ENCODE measurements at regions of chr6 and their contacts with region 1.

Region 1: DNA sequence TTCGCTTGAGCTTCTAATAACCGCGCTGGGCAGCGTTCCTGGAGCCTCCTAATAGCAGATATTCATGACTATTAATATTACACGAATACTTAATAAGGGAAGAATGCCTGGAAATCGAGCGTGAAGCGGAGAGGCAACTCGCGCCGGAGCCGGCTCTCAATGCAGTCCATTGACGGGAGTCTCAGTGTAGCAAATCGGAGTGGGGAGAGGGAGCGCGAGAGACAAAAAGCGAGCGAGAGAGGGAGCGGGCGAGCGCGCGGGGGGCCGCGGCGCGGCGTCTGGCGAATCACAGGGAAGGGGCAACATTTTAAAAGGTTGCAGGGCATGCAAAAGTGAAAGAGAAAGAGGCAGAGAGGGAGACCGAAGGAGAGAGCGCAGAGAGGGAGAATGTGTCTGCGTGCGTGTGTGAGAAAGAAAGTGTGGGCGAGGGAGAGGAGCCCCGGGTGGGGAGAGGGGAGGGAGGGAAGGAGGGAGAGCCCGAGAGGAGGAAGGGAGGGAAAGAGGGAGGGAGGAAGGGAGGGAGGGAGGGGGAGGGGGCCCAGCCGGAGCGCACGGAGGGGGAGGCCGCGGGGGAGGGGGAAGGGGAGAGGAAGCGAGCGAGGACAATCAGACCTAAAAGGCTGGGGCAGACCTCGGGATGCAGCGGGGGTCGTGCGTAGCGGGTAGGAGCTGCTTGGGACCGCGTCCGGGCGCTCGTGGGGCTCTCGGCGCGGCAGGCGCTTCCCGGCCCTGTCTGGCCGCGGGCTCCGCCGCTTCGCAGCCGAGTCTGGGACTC is 2.7 kb downstream of the TFAP2A start:
- DNase-seq: peak; percentile 75
- ATAC-seq: peak; percentile 50
- H3K4me3 ChIP-seq: peak overlapping the region; percentile 67
- H3K27ac ChIP-seq: peak overlapping the region; percentile 64
- H3K4me1 ChIP-seq: no peaks in the 10 kb centered on the region; the same call in 1 of the 2 replicates
- H3K27me3 ChIP-seq: peaks cover 74% of the 10 kb centered on the region
- CTCF ChIP-seq: no peak
- POLR2A ChIP-seq: no peak
- RAD21 ChIP-seq: no peak

Region 2: GRCh38 chr6:9140172-9140571 is 1272.0 kb before region 1 on chr6:
- CTCF ChIA-PET with region 1: no interaction called
- POLR2A ChIA-PET with region 1: no interaction called
- dilution Hi-C with region 1: no loop called
- in situ Hi-C with region 1: no loop called
- intact Hi-C with region 1: loop called (anchors 5 kb)
- DNase-seq: peak; percentile 12
- ATAC-seq: peak; percentile 5; the same call in 1 of the 2 replicates
- H3K4me3 ChIP-seq: no peak overlapping the region
- H3K27ac ChIP-seq: no peak overlapping the region
- H3K4me1 ChIP-seq: peaks cover 5% of the 10 kb centered on the region
- H3K27me3 ChIP-seq: no peaks in the 10 kb centered on the region
- CTCF ChIP-seq: no peak
- POLR2A ChIP-seq: no peak
- RAD21 ChIP-seq: no peak

Region 3: DNA sequence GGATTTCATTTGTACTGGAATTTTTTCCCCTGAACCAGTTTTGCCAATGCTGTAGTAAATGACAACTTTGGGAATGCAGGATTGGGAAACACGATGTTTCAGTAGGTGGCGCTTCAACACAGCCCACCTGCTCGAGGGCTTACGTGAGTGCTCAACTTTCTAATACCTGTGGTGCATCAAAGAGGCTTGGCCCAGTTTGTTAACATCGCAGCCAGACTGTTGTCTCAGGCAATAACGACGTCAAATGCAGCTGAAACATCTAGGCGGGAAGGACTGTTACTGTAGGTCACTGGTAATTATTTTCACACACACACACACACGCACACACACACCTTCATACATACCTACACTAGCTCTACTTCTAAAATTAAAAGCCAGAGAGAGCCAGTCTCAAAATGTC is 1161.3 kb before region 1 on chr6:
- CTCF ChIA-PET with region 1: interaction called, 5 read pairs
- POLR2A ChIA-PET with region 1: no interaction called
- dilution Hi-C with region 1: no loop called
- in situ Hi-C with region 1: no loop called
- intact Hi-C with region 1: loop called (anchors 5 kb)
- DNase-seq: peak; percentile 53
- ATAC-seq: peak; percentile 59
- H3K4me3 ChIP-seq: no peak overlapping the region
- H3K27ac ChIP-seq: no peak overlapping the region
- H3K4me1 ChIP-seq: no peaks in the 10 kb centered on the region
- H3K27me3 ChIP-seq: no peaks in the 10 kb centered on the region
- CTCF ChIP-seq: peak; percentile 55
- POLR2A ChIP-seq: no peak
- RAD21 ChIP-seq: peak; percentile 80

Region 4: DNA sequence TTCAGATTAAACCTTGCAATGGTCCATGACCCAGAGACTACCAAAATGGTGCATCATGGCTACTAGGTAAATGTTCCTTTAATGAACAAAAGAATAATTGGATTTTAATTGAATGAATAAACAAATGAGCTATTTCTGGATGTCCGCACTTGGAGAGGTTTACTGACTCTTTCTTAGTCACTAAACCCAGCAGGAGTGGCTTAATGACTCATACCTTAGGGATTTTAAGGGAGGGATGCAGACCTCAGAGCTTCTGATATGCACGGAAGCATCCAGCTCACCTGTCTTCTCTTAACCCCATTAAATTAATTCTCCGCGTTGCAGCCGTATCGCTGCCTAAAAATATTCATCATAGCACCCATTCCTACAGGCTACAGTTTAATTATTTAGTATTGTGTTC is 1006.8 kb before region 1 on chr6:
- CTCF ChIA-PET with region 1: no interaction called
- POLR2A ChIA-PET with region 1: no interaction called
- dilution Hi-C with region 1: no loop called
- in situ Hi-C with region 1: no loop called
- intact Hi-C with region 1: loop called (anchors 10 kb)
- DNase-seq: peak; percentile 91
- ATAC-seq: peak; percentile 75
- H3K4me3 ChIP-seq: no peak overlapping the region
- H3K27ac ChIP-seq: no peak overlapping the region
- H3K4me1 ChIP-seq: peaks cover 7% of the 10 kb centered on the region
- H3K27me3 ChIP-seq: no peaks in the 10 kb centered on the region
- CTCF ChIP-seq: no peak
- POLR2A ChIP-seq: no peak
- RAD21 ChIP-seq: no peak

Region 5: DNA sequence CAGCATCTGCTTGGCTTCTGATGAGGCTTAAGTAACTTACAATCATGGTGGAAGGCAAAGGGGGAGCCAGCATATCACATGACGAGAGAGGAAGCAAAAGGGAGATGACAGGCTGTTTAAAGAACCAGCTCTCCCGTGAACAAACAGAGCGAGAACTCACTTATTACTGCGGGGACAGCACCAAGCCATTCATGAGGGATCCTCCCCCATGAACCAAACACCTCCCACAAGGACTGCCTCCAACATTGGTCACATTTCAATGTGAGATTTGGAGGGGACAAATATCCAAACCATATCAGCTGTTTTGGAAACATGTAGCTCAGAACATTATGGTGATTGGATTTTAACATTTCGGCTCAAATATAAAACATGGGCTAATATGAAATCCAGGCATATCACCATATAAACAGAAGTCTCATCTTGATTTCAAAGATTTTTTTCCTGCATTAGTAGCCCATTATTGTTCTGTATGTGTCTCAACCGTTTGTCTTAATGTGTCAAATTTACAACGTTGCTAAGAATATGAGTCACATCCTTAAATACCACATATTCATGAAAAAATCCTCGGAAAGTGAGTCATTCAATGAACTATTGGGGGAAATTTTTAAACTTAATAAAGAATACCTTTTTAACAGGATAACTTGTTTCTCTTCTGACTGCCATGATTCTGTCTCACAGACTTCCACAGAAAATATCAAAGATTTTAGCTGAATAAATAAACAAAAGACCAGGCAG is 891.6 kb before region 1 on chr6:
- CTCF ChIA-PET with region 1: no interaction called
- POLR2A ChIA-PET with region 1: no interaction called
- dilution Hi-C with region 1: no loop called
- in situ Hi-C with region 1: loop called (anchors 25 kb)
- intact Hi-C with region 1: loop called (anchors 5 kb)
- DNase-seq: peak; percentile 89
- ATAC-seq: peak; percentile 39
- H3K4me3 ChIP-seq: no peak overlapping the region
- H3K27ac ChIP-seq: peak overlapping the region; percentile 57
- H3K4me1 ChIP-seq: peaks cover 10% of the 10 kb centered on the region
- H3K27me3 ChIP-seq: no peaks in the 10 kb centered on the region
- CTCF ChIP-seq: no peak
- POLR2A ChIP-seq: no peak
- RAD21 ChIP-seq: no peak

Region 6: DNA sequence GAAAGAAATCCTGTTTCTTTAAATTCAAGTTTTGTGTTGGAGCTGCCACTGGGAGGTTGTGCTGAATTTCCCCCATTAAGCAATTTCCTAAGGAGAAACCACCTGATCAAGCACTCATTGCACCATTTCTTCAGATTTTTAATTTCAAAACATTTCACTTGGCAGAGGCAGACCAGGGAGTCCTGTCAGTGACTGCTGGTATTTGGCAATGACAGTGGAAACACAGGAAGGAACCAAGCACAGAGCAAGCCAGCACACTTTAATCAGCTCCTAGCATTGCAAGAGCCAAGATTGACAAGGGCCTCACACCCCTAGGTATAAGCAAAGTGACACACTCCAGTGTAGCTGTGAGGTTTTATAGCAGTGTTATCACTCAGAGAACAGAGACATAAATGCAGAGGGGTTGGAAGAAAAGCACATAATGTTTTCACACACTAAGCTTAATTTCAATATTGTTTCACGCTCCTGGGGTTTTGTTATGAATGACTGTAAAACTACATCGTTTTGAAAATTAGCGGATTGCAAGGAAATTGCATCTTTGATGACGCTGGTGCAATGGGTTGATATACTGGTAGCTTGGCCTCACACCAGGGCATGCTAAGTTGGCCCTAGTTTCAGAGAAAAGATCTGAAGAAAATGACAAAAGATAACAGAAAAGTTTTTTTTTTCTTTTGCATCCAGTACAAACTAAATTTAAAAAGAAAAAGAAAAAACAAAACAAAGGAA is 765.7 kb before region 1 on chr6:
- CTCF ChIA-PET with region 1: no interaction called
- POLR2A ChIA-PET with region 1: no interaction called
- dilution Hi-C with region 1: no loop called
- in situ Hi-C with region 1: no loop called
- intact Hi-C with region 1: loop called (anchors 10 kb)
- DNase-seq: peak; percentile 38
- ATAC-seq: peak; percentile 28; the same call in 1 of the 2 replicates
- H3K4me3 ChIP-seq: no peak overlapping the region
- H3K27ac ChIP-seq: peak overlapping the region; percentile 60
- H3K4me1 ChIP-seq: peaks cover 6% of the 10 kb centered on the region
- H3K27me3 ChIP-seq: no peaks in the 10 kb centered on the region
- CTCF ChIP-seq: no peak
- POLR2A ChIP-seq: no peak
- RAD21 ChIP-seq: no peak

Region 7: GRCh38 chr6:10256113-10256690 is 156.0 kb before region 1 on chr6:
- CTCF ChIA-PET with region 1: no interaction called
- POLR2A ChIA-PET with region 1: no interaction called
- dilution Hi-C with region 1: no loop called
- in situ Hi-C with region 1: no loop called
- intact Hi-C with region 1: loop called (anchors 5 kb)
- DNase-seq: no peak
- ATAC-seq: peak; percentile 46; the same call in 1 of the 2 replicates
- H3K4me3 ChIP-seq: no peak overlapping the region
- H3K27ac ChIP-seq: no peak overlapping the region
- H3K4me1 ChIP-seq: no peaks in the 10 kb centered on the region
- H3K27me3 ChIP-seq: no peaks in the 10 kb centered on the region
- CTCF ChIP-seq: peak; percentile 34
- POLR2A ChIP-seq: no peak
- RAD21 ChIP-seq: no peak

Region 8: GRCh38 chr6:10598084-10598960 is 186.2 kb after region 1 on chr6:
- CTCF ChIA-PET with region 1: no interaction called
- POLR2A ChIA-PET with region 1: no interaction called
- dilution Hi-C with region 1: no loop called
- in situ Hi-C with region 1: no loop called
- intact Hi-C with region 1: no loop called
- DNase-seq: no peak
- ATAC-seq: no peak
- H3K4me3 ChIP-seq: no peak overlapping the region
- H3K27ac ChIP-seq: no peak overlapping the region
- H3K4me1 ChIP-seq: no peaks in the 10 kb centered on the region
- H3K27me3 ChIP-seq: no peaks in the 10 kb centered on the region
- CTCF ChIP-seq: no peak
- POLR2A ChIP-seq: no peak
- RAD21 ChIP-seq: no peak

Region 9: GRCh38 chr6:10886691-10887535 is 474.8 kb after region 1 on chr6 and contains the start of gene SYCP2L:
- CTCF ChIA-PET with region 1: no interaction called
- POLR2A ChIA-PET with region 1: no interaction called
- dilution Hi-C with region 1: no loop called
- in situ Hi-C with region 1: no loop called
- intact Hi-C with region 1: no loop called
- DNase-seq: peak; percentile 65
- ATAC-seq: peak; percentile 72
- H3K4me3 ChIP-seq: peak within 1 kb of the TSS; percentile 43
- H3K27ac ChIP-seq: no peak within 1 kb of the TSS
- H3K4me1 ChIP-seq: no peaks in the 10 kb centered on the region
- H3K27me3 ChIP-seq: peaks cover 48% of the 10 kb centered on the region
- CTCF ChIP-seq: peak; percentile 16; the same call in 1 of the 2 replicates
- POLR2A ChIP-seq: no peak
- RAD21 ChIP-seq: no peak
- total RNA-seq, gene SYCP2L: not detected in 2 replicates

Region 10: GRCh38 chr6:10908228-10908627 is 496.1 kb after region 1 on chr6:
- CTCF ChIA-PET with region 1: no interaction called
- POLR2A ChIA-PET with region 1: no interaction called
- dilution Hi-C with region 1: no loop called
- in situ Hi-C with region 1: no loop called
- intact Hi-C with region 1: no loop called
- DNase-seq: no peak
- ATAC-seq: no peak
- H3K4me3 ChIP-seq: no peak overlapping the region
- H3K27ac ChIP-seq: no peak overlapping the region
- H3K4me1 ChIP-seq: no peaks in the 10 kb centered on the region
- H3K27me3 ChIP-seq: no peaks in the 10 kb centered on the region
- CTCF ChIP-seq: no peak
- POLR2A ChIP-seq: no peak
- RAD21 ChIP-seq: no peak